Stomach (tissue), 19 donors: ENCODE measurements at regions of chr17 and their contacts with region 1.

Region 1: DNA sequence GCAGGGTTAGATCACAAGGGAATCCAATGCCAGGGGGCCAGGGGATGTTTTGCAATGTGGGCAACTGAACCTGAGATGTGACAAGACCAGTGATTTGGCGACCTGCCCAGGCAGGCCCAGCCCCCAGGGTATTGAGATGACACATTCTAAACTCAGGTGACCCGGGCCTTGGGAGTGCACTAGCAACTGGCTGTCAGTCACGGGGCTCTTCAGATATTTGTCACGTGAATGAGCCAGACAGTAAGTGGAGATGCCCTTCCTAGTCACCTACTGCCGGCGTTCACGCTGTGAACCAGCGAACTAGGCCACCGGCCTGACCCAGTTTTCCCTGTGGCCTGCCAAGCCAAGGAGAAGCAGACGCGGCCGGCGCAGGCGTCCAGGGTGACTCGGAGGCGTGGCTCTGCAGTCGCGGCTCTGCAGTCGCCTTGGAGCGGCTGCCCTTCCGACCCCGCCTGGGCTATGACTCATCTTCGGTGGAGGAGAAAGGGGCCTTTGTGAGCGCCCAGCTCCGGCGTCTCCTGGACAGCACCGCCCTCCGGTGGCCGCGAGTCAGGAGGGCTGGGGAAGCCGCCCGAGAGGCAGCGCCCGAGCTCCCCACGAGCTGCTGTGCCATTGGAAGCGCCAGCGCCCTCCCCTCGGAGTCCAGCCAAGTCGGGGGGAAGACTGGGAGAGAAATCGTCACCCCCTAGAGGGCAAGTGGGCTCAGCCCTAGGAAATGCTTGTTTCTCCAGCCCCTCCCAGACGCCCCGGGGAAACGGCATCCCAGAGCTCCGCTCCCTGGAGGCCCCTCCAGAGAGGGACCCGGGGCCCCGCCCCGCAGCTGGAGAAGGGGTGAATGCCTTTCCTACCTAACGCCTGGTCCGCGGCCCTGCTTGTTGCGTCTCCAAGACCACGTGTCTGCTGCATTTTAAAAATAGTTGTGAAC is 38.8 kb downstream of the WSB1 start:
- DNase-seq: peak; percentile 97 to 99
- H3K4me3 ChIP-seq: peak overlapping the region; percentile 40 to 45 (median 42)
- H3K27ac ChIP-seq: peak overlapping the region; percentile 78 to 90 (median 86)
- H3K4me1 ChIP-seq: peaks cover 7 to 23% (median 17%) of the 10 kb centered on the region in 4 donors
- H3K27me3 ChIP-seq: no peaks in the 10 kb centered on the region
- CTCF ChIP-seq: peak in 5 of 7 experiments; percentile 67 to 93 (median 87)
- EP300 ChIP-seq: no peak
- POLR2A ChIP-seq: no peak

Region 2: DNA sequence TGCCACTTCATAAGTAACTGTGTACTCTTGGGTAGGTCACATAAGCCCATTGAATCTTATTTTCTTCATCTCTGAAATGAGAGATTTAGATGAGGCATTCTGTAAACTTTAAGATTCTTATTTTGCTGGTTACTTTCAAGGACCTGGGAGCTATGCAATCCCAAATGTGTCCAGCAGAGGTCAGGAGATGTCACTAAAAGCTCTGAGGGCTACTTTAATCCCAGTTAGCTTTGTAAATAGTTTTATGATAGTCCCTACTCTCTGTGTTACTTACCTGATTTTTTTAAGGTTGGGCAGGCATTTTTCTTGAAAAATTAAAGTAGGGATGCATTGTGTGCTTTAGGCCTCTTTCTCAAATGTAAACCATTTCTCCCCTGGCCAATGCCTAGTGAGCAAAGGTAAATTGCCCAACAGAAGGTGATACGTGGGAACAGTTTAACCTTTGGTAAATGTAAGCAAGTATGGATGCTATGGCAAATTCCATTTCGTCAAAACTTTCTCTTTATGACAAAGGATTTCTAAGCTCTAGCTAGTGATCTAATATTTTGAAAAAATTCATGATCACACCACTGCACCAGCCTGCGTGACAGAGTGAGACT is 95.9 kb before region 1 on chr17:
- intact Hi-C with region 1: loop called (anchors 5 kb)
- DNase-seq: peak; percentile 84 to 90
- H3K4me3 ChIP-seq: no peak overlapping the region
- H3K27ac ChIP-seq: no peak overlapping the region
- H3K4me1 ChIP-seq: peaks cover 3 to 28% (median 9%) of the 10 kb centered on the region in 4 donors
- H3K27me3 ChIP-seq: no peaks in the 10 kb centered on the region
- CTCF ChIP-seq: peak in 5 of 7 experiments; percentile 82 to 96 (median 94)
- EP300 ChIP-seq: no peak
- POLR2A ChIP-seq: no peak